ENCODE measurements at regions of chrX and their contacts with region 1.

Region 1: DNA sequence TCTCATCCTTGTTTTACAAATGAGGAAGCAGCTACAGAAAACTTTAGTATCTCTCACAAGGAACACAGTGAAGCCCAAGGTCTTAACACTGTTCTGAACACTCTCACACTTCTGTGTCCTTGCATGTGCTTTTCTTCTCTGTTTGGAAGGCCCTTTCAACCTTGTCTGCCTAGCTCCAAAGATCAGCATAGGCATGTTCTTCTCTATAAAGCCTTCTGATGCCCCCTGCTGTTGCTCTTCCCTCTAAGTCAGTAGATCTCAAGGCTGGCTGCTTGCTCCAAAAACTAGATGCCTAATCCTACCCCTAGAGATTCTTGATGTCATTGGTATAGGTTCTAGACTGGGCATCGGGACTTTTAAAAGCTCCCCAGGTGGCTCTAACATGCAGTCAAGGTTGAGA is 5.9 kb downstream of the APOO start:
- DNase-seq: peak; percentile 71
- H3K4me3 ChIP-seq: no peak overlapping the region
- H3K27ac ChIP-seq: no peak overlapping the region
- H3K4me1 ChIP-seq: peaks cover 24% of the 10 kb centered on the region
- CTCF ChIP-seq: peak; percentile 56

Region 2: GRCh38 chrX:23694606-23695005 is 207.2 kb before region 1 on chrX:
- CTCF ChIA-PET with region 1: interaction called, 3 read pairs
- POLR2A ChIA-PET with region 1: interaction called, 3 read pairs
- intact Hi-C with region 1: loop called (anchors 1 kb)
- DNase-seq: peak; percentile 65
- H3K4me3 ChIP-seq: no peak overlapping the region
- H3K27ac ChIP-seq: no peak overlapping the region
- H3K4me1 ChIP-seq: no peaks in the 10 kb centered on the region
- CTCF ChIP-seq: peak; percentile 41

Region 3: GRCh38 chrX:23782863-23783568 is 118.8 kb before region 1 on chrX and contains the start of gene SAT1:
- CTCF ChIA-PET with region 1: interaction called, 16 read pairs
- POLR2A ChIA-PET with region 1: interaction called, 16 read pairs
- intact Hi-C with region 1: loop called (anchors 1 kb)
- DNase-seq: peak; percentile 95
- H3K4me3 ChIP-seq: peak within 1 kb of the TSS; percentile 89
- H3K27ac ChIP-seq: peak within 1 kb of the TSS; percentile 59
- H3K4me1 ChIP-seq: peaks cover 26% of the 10 kb centered on the region
- CTCF ChIP-seq: peak; percentile 81
- total RNA-seq, gene SAT1: 46.9 and 75.9 TPM in 2 replicates

Measured in OCI-LY7 (cell line).